Mammary epithelial cell (primary cell): ENCODE measurements at regions of chr20 and their contacts with region 1.

Region 1: GRCh38 chr20:25669826-25670422 is 26.7 kb downstream of the ZNF337 start:
- DNase-seq: peak; percentile 91
- H3K4me3 ChIP-seq: no peak overlapping the region
- H3K27ac ChIP-seq: peak overlapping the region; percentile 22
- H3K4me1 ChIP-seq: peaks cover 9% of the 10 kb centered on the region
- H3K27me3 ChIP-seq: no peaks in the 10 kb centered on the region
- CTCF ChIP-seq: peak in 1 of 2 donors; percentile 10

Region 2: DNA sequence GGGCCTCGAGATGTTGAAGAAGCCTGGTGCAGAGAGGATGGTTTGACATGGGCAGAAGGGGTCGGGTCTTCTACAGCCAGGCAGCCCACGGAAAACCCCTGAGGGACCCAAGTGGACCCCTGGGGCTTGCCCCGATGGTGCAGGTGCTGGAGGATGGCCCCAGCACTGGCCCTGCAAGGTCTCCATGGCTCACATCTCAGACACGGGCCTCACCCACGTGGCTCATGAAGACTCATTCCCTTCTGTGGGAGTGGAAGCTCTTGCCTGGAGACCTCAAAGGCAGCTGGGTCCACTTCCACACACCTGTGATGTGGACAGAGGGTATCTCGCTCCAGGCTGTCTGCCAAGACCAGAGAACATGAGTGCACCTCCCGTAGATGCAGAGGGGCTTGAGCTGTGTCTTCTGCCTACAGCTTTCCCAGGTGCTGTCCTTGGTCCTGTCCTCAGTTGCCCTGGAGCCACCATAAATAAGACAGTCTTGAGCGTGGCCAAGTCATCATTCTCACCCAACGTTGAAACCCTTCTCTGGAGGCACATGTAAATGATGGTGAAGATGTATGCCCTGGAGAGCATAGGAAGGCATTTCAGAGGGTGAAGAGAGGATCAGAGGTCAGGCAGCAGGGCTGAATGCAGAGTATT is 1092.5 kb before region 1 on chr20:
- CTCF ChIA-PET with region 1: no interaction called
- dilution Hi-C with region 1: no loop called
- in situ Hi-C with region 1: no loop called
- intact Hi-C with region 1: no loop called
- DNase-seq: no peak
- H3K4me3 ChIP-seq: no peak overlapping the region
- H3K27ac ChIP-seq: no peak overlapping the region
- H3K4me1 ChIP-seq: no peaks in the 10 kb centered on the region
- H3K27me3 ChIP-seq: no peaks in the 10 kb centered on the region
- CTCF ChIP-seq: no peak

Region 3: DNA sequence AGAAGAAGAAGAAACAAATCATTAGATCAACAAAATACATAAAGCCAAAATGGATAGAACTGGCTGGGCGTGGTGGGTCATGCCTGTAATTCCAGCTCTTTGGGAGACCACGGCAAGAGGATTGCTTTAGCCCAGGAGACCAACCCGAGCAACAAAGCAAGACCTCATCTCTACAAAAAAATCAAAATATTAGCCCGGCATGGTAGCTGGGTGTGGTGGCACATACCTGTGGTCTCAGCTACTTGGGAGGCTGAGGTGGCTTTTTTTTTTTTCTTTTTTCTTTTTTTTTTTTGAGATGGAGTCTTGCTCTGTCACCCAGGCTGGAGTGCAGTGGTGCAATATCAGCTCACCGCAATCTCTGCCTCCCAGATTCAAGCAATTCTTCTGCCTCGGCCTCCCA is 106.0 kb before region 1 on chr20:
- CTCF ChIA-PET with region 1: no interaction called
- dilution Hi-C with region 1: no loop called
- in situ Hi-C with region 1: no loop called
- intact Hi-C with region 1: no loop called
- DNase-seq: no peak
- H3K4me3 ChIP-seq: no peak overlapping the region
- H3K27ac ChIP-seq: no peak overlapping the region
- H3K4me1 ChIP-seq: no peaks in the 10 kb centered on the region
- H3K27me3 ChIP-seq: no peaks in the 10 kb centered on the region
- CTCF ChIP-seq: no peak

Region 4: DNA sequence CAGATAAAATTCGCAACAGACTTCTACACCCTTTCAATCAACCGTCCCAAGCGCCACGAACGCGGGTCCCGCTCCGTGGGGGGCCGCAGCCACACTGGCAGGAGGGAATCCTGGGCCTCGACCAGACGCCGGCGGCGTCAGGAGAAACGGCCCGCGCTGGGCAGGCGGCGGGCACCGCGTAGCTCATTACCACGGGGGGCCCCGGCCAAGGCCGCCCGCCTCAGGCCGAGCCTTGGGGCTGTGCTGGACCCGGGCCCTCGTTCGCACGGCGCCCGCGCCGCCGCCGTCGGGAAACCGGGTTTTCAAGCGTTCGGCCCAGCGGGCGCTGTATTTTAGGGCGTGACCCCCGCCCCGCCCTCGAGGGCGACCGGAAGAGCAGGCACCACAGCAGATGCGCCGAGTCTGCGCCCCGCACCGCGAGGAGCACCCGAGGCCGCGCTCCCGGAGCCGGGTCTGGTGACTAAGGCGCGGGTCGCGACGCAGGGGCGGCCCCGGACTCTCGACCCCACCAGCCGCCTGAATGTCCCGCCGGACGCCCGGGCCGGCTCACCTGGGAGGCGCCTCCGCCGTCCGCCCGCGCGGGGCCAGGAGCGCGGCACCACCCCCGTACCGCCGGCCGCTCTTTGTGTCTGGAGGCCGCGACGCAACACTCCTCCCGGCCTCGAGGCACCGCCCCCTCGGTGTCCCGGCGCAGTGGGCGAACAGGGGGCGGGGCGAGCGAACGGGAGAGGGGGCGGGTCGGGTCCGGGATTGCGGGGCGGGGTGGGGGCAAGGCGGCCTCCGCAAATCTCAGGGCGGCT is 84.8 kb before region 1 on chr20 and contains the start of gene NINL:
- CTCF ChIA-PET with region 1: no interaction called
- dilution Hi-C with region 1: no loop called
- in situ Hi-C with region 1: no loop called
- intact Hi-C with region 1: loop called (anchors 1 kb)
- DNase-seq: peak; percentile 41
- H3K4me3 ChIP-seq: peak within 1 kb of the TSS; percentile 63 to 70 (median 65)
- H3K27ac ChIP-seq: no peak within 1 kb of the TSS
- H3K4me1 ChIP-seq: no peaks in the 10 kb centered on the region
- H3K27me3 ChIP-seq: no peaks in the 10 kb centered on the region
- CTCF ChIP-seq: no peak
- total RNA-seq, gene NINL: 6.8 to 7.7 TPM

Region 5: DNA sequence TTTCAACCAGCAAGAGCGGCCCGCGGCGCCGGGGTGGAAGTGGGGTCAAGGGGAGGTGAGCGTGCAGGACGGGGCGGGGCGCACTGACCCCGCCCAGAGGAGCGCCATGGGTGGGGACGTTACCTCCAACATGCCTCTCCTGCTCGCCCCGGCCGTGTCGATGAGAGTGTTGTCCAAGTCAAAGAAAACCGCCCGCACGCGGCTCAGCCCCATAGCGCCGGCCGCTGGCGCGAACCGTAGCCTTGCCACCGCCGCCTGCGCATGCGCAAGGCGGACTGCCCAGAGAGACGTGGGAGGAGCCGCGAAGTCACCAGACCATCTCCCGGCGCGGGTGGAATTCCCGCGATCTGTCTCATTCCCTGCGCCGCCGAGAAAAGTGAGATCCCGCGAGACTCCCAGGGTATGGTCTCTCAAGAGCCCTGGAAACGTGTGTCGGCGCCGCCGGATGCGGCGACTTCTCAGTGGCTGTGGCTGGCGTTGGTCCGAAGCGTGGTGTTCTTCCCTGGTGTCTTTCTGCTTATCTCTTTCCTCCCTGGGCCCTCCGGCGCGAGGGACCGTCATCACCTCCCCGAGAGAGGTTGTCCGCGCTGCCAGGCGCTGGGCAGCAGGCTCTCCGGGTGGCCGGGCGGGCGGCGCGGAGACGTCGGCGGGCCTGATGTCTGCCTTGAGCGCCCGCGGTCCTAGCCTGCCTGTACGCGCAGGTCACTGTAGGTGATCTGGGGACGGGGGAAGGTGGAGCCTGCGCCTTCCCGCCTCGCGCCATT is 46.0 kb before region 1 on chr20 and contains the start of gene NANP:
- CTCF ChIA-PET with region 1: no interaction called
- dilution Hi-C with region 1: no loop called
- in situ Hi-C with region 1: no loop called
- intact Hi-C with region 1: loop called (anchors 1 kb)
- DNase-seq: peak; percentile 98
- H3K4me3 ChIP-seq: peak within 1 kb of the TSS; percentile 53 to 94 (median 87)
- H3K27ac ChIP-seq: peak within 1 kb of the TSS; percentile 83
- H3K4me1 ChIP-seq: peaks cover 18% of the 10 kb centered on the region
- H3K27me3 ChIP-seq: no peaks in the 10 kb centered on the region
- CTCF ChIP-seq: peak in 1 of 2 donors; percentile 25
- total RNA-seq, gene NANP: 7.5 TPM

Region 6: DNA sequence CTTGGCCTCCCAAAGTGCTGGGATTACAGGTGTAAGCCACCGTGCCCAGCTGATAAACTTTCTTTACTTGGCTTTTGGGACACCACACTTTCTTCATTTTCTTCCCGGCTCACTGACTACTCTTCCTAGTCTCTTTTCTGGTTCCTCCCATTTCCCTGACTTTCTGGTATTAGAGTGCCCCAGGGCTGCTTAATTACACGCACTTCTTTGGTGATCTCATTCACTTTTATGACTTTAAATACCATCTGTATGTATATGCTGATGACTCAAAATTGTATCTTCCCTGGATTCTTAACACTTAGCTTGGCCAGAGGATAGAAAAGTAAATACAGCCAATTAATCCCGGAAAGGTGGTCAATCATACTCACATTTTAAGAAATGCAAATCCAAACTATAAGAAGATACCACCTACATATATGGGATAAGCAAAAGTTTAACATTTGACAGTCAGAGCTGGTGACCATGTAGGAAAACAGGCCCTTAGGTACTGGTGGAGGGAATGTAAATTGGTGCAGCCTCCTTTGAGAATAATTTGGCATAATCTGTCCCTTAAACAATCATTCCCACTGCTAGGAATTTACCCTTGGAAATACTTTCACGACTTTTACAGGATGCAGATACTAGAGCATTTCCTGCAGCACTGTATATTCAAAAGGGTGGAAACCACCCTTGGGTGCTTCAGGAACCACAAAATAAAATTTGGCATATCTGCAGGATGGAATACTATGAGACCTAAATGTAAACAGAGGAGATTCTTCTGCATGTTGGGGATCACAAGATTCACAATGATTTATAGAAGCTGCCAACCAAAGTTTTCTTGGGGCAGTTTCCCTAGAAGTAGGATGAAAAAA is 36.8 kb before region 1 on chr20:
- CTCF ChIA-PET with region 1: no interaction called
- dilution Hi-C with region 1: no loop called
- in situ Hi-C with region 1: no loop called
- intact Hi-C with region 1: loop called (anchors 2 kb)
- DNase-seq: peak; percentile 82
- H3K4me3 ChIP-seq: no peak overlapping the region
- H3K27ac ChIP-seq: peak overlapping the region; percentile 18
- H3K4me1 ChIP-seq: peaks cover 12% of the 10 kb centered on the region
- H3K27me3 ChIP-seq: no peaks in the 10 kb centered on the region
- CTCF ChIP-seq: no peak

Region 7: DNA sequence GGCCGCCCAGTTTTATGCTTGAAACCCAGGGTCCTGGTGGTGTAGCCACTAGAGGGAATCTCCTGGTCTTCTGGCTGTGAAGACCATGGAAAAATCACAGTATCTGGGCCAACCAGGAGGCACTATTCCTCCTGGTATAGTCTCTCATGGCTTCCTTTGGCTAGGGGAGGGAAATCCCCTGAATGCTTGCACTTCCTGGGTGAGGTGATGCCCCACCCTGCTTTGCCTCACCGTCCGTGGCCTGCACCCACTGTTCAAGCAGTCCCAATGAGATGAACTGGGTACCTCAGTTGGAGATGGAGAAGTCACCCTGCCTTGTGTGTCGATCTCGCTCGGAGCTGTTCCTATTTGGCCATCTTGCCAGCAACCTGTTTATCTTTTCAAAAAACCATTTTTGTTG is 36.9 kb after region 1 on chr20:
- CTCF ChIA-PET with region 1: no interaction called
- dilution Hi-C with region 1: no loop called
- in situ Hi-C with region 1: no loop called
- intact Hi-C with region 1: no loop called
- DNase-seq: no peak
- H3K4me3 ChIP-seq: no peak overlapping the region
- H3K27ac ChIP-seq: no peak overlapping the region
- H3K4me1 ChIP-seq: no peaks in the 10 kb centered on the region
- H3K27me3 ChIP-seq: no peaks in the 10 kb centered on the region
- CTCF ChIP-seq: no peak